ENCODE measurements at regions of chr13 and their contacts with region 1.

Region 1: DNA sequence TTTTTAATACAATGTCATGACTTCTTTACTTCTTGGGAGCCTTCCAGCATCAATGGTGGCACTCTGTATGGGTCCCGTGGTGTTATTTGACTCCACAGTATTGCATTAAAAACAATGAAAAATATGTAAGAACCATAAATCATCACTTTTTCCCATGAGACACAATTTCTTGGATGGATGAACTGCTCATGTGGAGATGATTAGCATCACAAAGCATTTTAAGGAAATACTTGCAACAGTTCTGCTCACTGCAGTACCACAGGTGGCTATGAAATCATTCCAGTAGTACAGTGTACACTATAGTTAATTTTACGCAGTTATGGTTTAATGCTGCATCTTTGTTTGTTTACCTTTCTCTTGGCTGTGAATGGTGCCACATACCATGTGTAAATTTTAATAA is 37.2 kb upstream of the C1QTNF9B start:
- DNase-seq: no peak
- H3K4me3 ChIP-seq: no peak overlapping the region
- H3K27ac ChIP-seq: no peak overlapping the region
- H3K27me3 ChIP-seq: no peaks in the 10 kb centered on the region
- CTCF ChIP-seq: no peak

Region 2: GRCh38 chr13:23950736-23951672 is 16.5 kb after region 1 on chr13:
- CTCF ChIA-PET with region 1: interaction called, 11 read pairs
- POLR2A ChIA-PET with region 1: no interaction called
- DNase-seq: no peak
- H3K4me3 ChIP-seq: no peak overlapping the region
- H3K27ac ChIP-seq: no peak overlapping the region
- H3K27me3 ChIP-seq: peaks cover 5% of the 10 kb centered on the region
- CTCF ChIP-seq: 0 out of 2 replicates have a peak, but pooled peaks have one; percentile 11